ENCODE measurements at regions of chr20 and their contacts with region 1.

Region 1: DNA sequence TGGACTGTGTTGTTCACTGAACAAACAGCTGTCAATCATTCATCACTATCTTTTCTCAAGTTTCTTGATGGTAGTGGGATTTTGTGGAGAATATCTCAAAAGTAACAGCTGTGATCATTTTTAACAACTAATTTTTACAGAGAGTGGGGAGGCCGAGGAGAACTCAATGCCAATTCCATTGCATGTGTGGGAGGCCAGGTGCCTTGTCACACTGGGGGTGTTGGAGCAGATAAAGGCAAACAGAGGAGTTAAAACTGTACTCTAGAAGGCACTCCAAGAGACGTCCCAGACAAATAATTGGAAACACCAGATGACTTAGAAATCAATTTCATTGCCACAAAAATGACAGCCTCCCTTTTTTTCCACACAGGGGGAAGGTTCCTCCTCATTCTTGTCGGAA is 267.2 kb upstream of the PLCB4 start:
- DNase-seq: no peak
- H3K4me3 ChIP-seq: no peak overlapping the region
- H3K27ac ChIP-seq: no peak overlapping the region
- H3K4me1 ChIP-seq: no peaks in the 10 kb centered on the region
- H3K27me3 ChIP-seq: 0 out of 2 replicates have a peak, but pooled peaks cover 5% of the 10 kb centered on the region
- CTCF ChIP-seq: no peak

Region 2: DNA sequence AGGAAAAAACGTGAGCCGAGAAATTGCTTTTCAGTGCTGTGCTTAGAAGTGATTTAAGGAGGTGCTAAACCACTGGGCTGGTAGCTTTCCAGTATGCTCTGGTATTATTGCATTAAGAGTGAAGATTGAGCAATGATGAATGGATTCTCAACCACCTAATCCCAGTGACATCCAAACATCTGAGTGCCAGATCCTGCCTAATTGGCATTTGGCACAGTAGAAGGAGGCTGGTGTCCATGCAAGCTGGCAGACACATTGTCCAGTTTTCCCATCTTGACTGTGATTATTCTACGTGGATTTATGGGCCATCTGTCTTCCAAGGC is 130.8 kb before region 1 on chr20:
- CTCF ChIA-PET with region 1: no interaction called
- POLR2A ChIA-PET with region 1: no interaction called
- intact Hi-C with region 1: no loop called
- DNase-seq: no peak
- H3K4me3 ChIP-seq: no peak overlapping the region
- H3K27ac ChIP-seq: no peak overlapping the region
- H3K4me1 ChIP-seq: no peaks in the 10 kb centered on the region
- H3K27me3 ChIP-seq: 0 out of 2 replicates have a peak, but pooled peaks cover 4% of the 10 kb centered on the region
- CTCF ChIP-seq: no peak

Region 3: GRCh38 chr20:9140162-9140760 is 338.6 kb after region 1 on chr20:
- CTCF ChIA-PET with region 1: interaction called, 10 read pairs
- POLR2A ChIA-PET with region 1: no interaction called
- intact Hi-C with region 1: no loop called
- DNase-seq: no peak
- H3K4me3 ChIP-seq: no peak overlapping the region
- H3K27ac ChIP-seq: no peak overlapping the region
- H3K4me1 ChIP-seq: no peaks in the 10 kb centered on the region
- H3K27me3 ChIP-seq: no peaks in the 10 kb centered on the region
- CTCF ChIP-seq: no peak

Measured in PC-9 (cell line).